ENCODE measurements at regions of chr17 and their contacts with region 1.

Region 1: DNA sequence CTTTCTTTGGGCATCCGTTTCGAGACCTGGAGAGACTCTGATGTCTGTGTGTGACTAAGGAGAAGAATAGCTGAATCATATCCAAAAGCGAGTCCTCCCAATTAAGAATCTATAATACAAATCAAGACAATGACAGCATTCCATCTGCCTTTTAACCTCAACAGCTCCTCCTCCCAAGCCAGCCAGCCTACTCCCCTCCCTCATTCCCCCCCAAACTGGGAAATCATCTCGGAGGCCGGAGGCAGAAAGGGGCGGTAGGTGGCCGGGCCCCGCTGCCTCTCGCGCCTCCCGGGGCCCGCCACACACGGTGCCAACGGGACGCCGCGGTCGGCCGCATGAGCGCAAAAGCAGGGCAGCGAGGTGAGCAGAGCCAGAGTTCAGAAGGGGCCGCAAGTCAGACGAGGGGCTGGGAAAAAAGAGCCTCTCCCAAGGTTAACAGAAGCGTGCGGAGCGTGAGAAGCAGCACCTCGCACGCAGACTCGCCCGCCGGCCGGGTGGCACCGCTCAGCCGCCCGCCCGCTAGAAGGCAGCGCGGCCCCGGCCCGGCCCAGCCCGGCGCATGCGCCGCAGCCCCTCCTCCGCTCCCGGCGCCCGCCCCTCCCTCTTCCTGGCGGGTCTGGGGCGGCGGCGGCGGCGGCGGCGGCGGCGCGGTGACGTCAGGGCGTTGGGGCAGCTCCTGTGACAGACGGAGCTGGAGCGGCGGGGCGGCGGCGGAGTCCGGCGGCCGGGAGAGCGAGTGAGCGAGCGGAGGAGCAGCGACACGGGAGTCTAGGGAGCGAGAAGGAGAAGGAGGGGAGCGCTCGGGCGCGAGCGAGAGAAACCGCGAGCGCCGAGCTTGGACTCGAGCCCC is at the start of gene PAFAH1B1:
- DNase-seq: peak; percentile 91 to 94
- ATAC-seq: peak; percentile 89
- total RNA-seq, gene PAFAH1B1: 117 to 120 TPM

Region 2: GRCh38 chr17:2672026-2672425 is 78.8 kb after region 1 on chr17:
- intact Hi-C with region 1: loop called in 1 of 2 experiments (anchors 10 kb)
- DNase-seq: no peak
- ATAC-seq: no peak